B cell (primary cell): ENCODE measurements at regions of chr2 and their contacts with region 1.

Region 1: DNA sequence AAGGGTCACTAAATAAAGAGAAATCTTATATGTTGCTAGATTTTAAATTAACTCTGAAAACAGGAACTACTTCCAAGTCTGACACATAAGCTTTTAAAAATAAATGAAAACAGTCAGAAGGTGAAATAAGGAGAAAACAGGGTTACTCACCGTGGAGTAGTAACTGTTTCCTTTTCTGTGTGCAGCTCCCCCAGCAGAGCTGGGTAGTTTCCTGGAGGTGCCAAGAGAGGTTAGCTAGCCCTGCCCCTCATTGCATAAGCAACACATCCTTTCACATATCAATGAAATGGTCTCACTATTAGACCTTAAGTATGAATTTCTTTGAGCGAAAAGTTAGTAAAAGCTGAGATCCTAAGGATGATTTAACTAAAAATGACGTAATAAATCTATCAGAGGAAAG is 54.0 kb upstream of the GPR75 start:
- DNase-seq: peak; percentile 28
- ATAC-seq: peak; percentile 39
- H3K4me3 ChIP-seq: no peak overlapping the region
- H3K4me3 Mint-ChIP-seq: no peak overlapping the region
- H3K27ac ChIP-seq: peak overlapping the region in 1 of 2 donors; percentile 17
- H3K27ac Mint-ChIP-seq: peak overlapping the region; percentile 54
- H3K4me1 ChIP-seq: peaks cover 3 to 9% of the 10 kb centered on the region in 2 donors
- H3K4me1 Mint-ChIP-seq: peaks cover 11% of the 10 kb centered on the region
- H3K27me3 ChIP-seq: no peaks in the 10 kb centered on the region
- H3K27me3 Mint-ChIP-seq: no peaks in the 10 kb centered on the region
- CTCF ChIP-seq: no peak

Region 2: GRCh38 chr2:53877556-53877955 is 36.2 kb before region 1 on chr2:
- CTCF ChIA-PET with region 1: no interaction called
- POLR2A ChIA-PET with region 1: no interaction called
- intact Hi-C with region 1: loop called (anchors 5 kb)
- DNase-seq: no peak
- ATAC-seq: no peak
- H3K4me3 ChIP-seq: no peak overlapping the region
- H3K4me3 Mint-ChIP-seq: no peak overlapping the region
- H3K27ac ChIP-seq: no peak overlapping the region
- H3K27ac Mint-ChIP-seq: no peak overlapping the region
- H3K4me1 ChIP-seq: no peaks in the 10 kb centered on the region
- H3K4me1 Mint-ChIP-seq: no peaks in the 10 kb centered on the region
- H3K27me3 ChIP-seq: no peaks in the 10 kb centered on the region
- H3K27me3 Mint-ChIP-seq: no peaks in the 10 kb centered on the region
- CTCF ChIP-seq: no peak

Region 3: GRCh38 chr2:54497763-54498680 is 584.3 kb after region 1 on chr2:
- CTCF ChIA-PET with region 1: no interaction called
- POLR2A ChIA-PET with region 1: no interaction called
- intact Hi-C with region 1: no loop called
- DNase-seq: no peak
- ATAC-seq: no peak
- H3K4me3 ChIP-seq: no peak overlapping the region
- H3K4me3 Mint-ChIP-seq: no peak overlapping the region
- H3K27ac ChIP-seq: no peak overlapping the region
- H3K27ac Mint-ChIP-seq: no peak overlapping the region
- H3K4me1 ChIP-seq: no peaks in the 10 kb centered on the region
- H3K4me1 Mint-ChIP-seq: no peaks in the 10 kb centered on the region
- H3K27me3 ChIP-seq: no peaks in the 10 kb centered on the region
- H3K27me3 Mint-ChIP-seq: peaks cover 13% of the 10 kb centered on the region
- CTCF ChIP-seq: no peak